A549 (cell line): ENCODE measurements at regions of chr10 and their contacts with region 1.

Region 1: GRCh38 chr10:71933651-71934050 is 30.5 kb upstream of the CHST3 start:
- DNase-seq: no peak
- ATAC-seq: no peak
- H3K4me3 ChIP-seq: no peak overlapping the region
- H3K27ac ChIP-seq: no peak overlapping the region
- H3K4me1 ChIP-seq: peaks cover 6% of the 10 kb centered on the region
- CTCF ChIP-seq: no peak
- EP300 ChIP-seq: no peak
- POLR2A ChIP-seq: no peak
- RAD21 ChIP-seq: no peak

Region 2: GRCh38 chr10:71921324-71922027 is 12.2 kb before region 1 on chr10:
- CTCF ChIA-PET with region 1: interaction called, 12 read pairs
- POLR2A ChIA-PET with region 1: no interaction called
- DNase-seq: peak in 1 of 2 experiments; percentile 36
- ATAC-seq: peak in 1 of 2 experiments; percentile 51; a peak in 3 of 6 replicates
- H3K4me3 ChIP-seq: no peak overlapping the region
- H3K27ac ChIP-seq: peak overlapping the region; percentile 64 to 76
- H3K4me1 ChIP-seq: peaks cover 36% of the 10 kb centered on the region
- CTCF ChIP-seq: no peak
- EP300 ChIP-seq: no peak
- POLR2A ChIP-seq: no peak
- RAD21 ChIP-seq: no peak